A549 (cell line): ENCODE measurements at regions of chr3 and their contacts with region 1.

Region 1: GRCh38 chr3:16550676-16551341 is 37.3 kb upstream of the RFTN1 start:
- DNase-seq: peak; percentile 67 to 85
- ATAC-seq: peak; percentile 99
- H3K4me3 ChIP-seq: no peak overlapping the region
- H3K27ac ChIP-seq: peak overlapping the region; percentile 63 to 85; a peak in 5 of 6 replicates
- H3K4me1 ChIP-seq: 0 out of 3 replicates have a peak, but pooled peaks cover 4% of the 10 kb centered on the region
- CTCF ChIP-seq: peak; percentile 94
- EP300 ChIP-seq: no peak
- POLR2A ChIP-seq: no peak
- RAD21 ChIP-seq: peak; percentile 96 to 97

Region 2: GRCh38 chr3:16264708-16265454 is 285.9 kb before region 1 on chr3 and contains the starts of genes DPH3 and OXNAD1:
- CTCF ChIA-PET with region 1: interaction called, 41 read pairs
- POLR2A ChIA-PET with region 1: interaction called, 4 read pairs
- DNase-seq: peak; percentile 97 to 99
- ATAC-seq: peak; percentile 99
- H3K4me3 ChIP-seq: peak within 1 kb of the TSS; percentile 95
- H3K27ac ChIP-seq: peak within 1 kb of the TSS; percentile 85 to 88
- H3K4me1 ChIP-seq: peaks cover 19% of the 10 kb centered on the region
- CTCF ChIP-seq: no peak
- EP300 ChIP-seq: no peak
- POLR2A ChIP-seq: peak; percentile 75
- RAD21 ChIP-seq: no peak
- polyA plus RNA-seq, gene DPH3: 34.7 and 37.5 TPM in 2 replicates
- polyA plus RNA-seq, gene OXNAD1: 24.2 and 25.9 TPM in 2 replicates

Region 3: GRCh38 chr3:16516695-16517481 is 33.9 kb before region 1 on chr3:
- CTCF ChIA-PET with region 1: interaction called, 20 read pairs
- POLR2A ChIA-PET with region 1: no interaction called
- DNase-seq: peak; percentile 38
- ATAC-seq: peak; percentile 55 to 70; a peak in 4 of 6 replicates
- H3K4me3 ChIP-seq: no peak overlapping the region
- H3K27ac ChIP-seq: no peak overlapping the region
- H3K4me1 ChIP-seq: no peaks in the 10 kb centered on the region
- CTCF ChIP-seq: peak; percentile 49
- EP300 ChIP-seq: no peak
- POLR2A ChIP-seq: no peak
- RAD21 ChIP-seq: peak; percentile 60 to 65

Region 4: GRCh38 chr3:16538507-16538906 is 12.3 kb before region 1 on chr3:
- CTCF ChIA-PET with region 1: interaction called, 22 read pairs
- POLR2A ChIA-PET with region 1: no interaction called
- DNase-seq: no peak
- ATAC-seq: no peak
- H3K4me3 ChIP-seq: no peak overlapping the region
- H3K27ac ChIP-seq: no peak overlapping the region
- H3K4me1 ChIP-seq: no peaks in the 10 kb centered on the region
- CTCF ChIP-seq: no peak
- EP300 ChIP-seq: no peak
- POLR2A ChIP-seq: no peak
- RAD21 ChIP-seq: no peak

Region 5: GRCh38 chr3:16606398-16606797 is 55.6 kb after region 1 on chr3:
- CTCF ChIA-PET with region 1: no interaction called
- POLR2A ChIA-PET with region 1: no interaction called
- DNase-seq: no peak
- ATAC-seq: no peak
- H3K4me3 ChIP-seq: no peak overlapping the region
- H3K27ac ChIP-seq: no peak overlapping the region
- H3K4me1 ChIP-seq: no peaks in the 10 kb centered on the region
- CTCF ChIP-seq: no peak
- EP300 ChIP-seq: no peak
- POLR2A ChIP-seq: no peak
- RAD21 ChIP-seq: no peak